Activated CD8-positive, alpha-beta T cell treated with anti-CD3 and anti-CD28 coated beads for 36 hours (primary cell): ENCODE measurements at regions of chr5 and their contacts with region 1.

Region 1: DNA sequence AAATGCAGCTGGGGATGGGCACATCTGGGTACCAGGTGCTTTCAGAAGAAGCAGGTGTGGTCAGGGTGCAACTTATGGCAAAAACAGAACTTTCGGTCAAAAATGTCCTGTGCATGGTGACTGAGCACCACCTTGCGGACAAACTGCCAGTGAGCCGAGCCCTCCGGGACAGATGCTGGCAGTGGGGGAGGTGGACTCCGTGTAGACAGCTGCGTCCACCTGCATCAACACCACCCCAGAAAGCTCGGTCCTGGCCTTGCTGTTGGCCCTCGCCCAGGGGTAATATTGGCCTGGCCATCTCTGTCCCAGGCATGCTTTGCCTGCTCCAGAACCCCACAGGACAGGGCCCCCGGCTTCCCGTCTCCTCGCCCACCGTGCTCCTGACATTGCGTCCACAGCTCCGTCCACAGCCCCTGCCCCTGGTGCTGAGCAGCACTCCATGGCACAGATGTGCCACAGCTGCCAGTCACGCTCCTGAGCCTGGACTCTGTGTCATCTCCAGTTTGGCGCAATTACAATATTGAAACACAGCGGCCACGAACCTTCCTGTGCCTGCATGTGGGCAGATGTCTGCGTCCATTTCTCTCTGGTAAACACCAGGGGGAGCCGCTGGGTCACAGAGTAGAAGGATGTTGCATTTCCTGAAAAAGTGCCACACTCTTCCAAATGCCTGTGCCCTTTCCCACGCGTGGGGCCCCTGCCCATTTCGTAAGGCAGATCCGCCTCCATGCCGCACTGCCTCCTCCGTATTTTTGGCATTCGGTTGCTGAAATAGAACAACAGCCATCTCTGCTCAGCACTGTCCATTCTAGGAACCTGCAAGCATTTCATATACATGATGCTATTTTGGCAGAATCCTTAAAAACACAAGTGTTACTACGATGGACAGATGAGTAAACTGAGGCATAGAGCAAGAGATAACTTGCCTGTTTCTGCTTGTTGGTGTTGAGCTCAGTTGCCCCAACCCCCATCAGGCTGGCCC is 33.4 kb upstream of the SLC6A19 start:
- DNase-seq: peak; percentile 79
- ATAC-seq: peak; percentile 87
- H3K4me3 Mint-ChIP-seq: peak overlapping the region; percentile 55
- H3K27ac Mint-ChIP-seq: no peak overlapping the region
- H3K4me1 Mint-ChIP-seq: peaks cover 5% of the 10 kb centered on the region
- H3K27me3 Mint-ChIP-seq: peaks cover 10% of the 10 kb centered on the region
- CTCF ChIP-seq: peak; percentile 80

Region 2: DNA sequence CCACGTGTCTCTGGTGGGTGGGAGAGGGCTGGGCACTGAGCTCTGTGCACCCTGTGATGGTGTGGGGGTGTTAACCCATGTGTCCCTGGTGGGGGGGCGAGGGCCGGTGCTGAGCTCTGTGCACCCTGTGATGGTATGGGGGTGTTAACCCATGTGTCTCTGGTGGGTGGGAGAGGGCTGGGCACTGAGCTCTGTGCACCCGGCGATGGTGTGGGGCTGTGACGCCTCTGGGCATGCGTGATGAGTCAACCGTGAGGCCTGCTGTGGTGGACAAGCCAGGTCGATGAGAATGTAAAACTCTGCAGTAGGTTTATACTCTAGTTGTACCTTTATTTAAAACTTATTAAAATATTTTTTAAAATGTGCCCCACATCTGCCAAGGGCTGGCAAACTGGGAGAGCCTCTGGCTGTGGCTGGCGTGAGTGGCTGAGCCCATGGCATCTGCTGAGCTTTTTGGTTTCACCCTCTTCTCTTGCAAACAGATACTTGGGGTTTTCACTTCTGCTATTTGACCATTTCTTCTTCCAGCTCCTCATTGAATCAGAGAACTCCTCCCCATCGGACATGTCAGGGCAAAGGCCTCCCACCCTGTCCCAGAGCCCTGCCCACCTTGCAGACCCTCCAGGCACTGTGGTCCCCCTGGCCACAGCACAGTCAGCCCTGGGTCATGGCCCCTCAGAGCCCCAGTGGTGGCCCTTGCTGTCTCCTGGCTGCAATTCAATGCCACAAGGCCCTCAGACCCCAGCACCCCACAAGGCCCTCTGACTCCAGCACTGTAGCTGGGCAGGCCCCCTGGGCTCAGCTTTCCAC is 743.5 kb before region 1 on chr5:
- CTCF ChIA-PET with region 1: no interaction called
- POLR2A ChIA-PET with region 1: no interaction called
- intact Hi-C with region 1: no loop called
- DNase-seq: no peak
- ATAC-seq: no peak
- H3K4me3 Mint-ChIP-seq: no peak overlapping the region
- H3K27ac Mint-ChIP-seq: no peak overlapping the region
- H3K4me1 Mint-ChIP-seq: peaks cover 19% of the 10 kb centered on the region
- H3K27me3 Mint-ChIP-seq: peaks cover 6% of the 10 kb centered on the region
- CTCF ChIP-seq: no peak

Region 3: GRCh38 chr5:956941-957747 is 210.9 kb before region 1 on chr5:
- CTCF ChIA-PET with region 1: no interaction called
- POLR2A ChIA-PET with region 1: no interaction called
- intact Hi-C with region 1: no loop called
- DNase-seq: peak; percentile 89
- ATAC-seq: peak; percentile 87
- H3K4me3 Mint-ChIP-seq: peak overlapping the region; percentile 8
- H3K27ac Mint-ChIP-seq: peak overlapping the region; percentile 68
- H3K4me1 Mint-ChIP-seq: peaks cover 30% of the 10 kb centered on the region
- H3K27me3 Mint-ChIP-seq: peaks cover 28% of the 10 kb centered on the region
- CTCF ChIP-seq: no peak

Region 4: DNA sequence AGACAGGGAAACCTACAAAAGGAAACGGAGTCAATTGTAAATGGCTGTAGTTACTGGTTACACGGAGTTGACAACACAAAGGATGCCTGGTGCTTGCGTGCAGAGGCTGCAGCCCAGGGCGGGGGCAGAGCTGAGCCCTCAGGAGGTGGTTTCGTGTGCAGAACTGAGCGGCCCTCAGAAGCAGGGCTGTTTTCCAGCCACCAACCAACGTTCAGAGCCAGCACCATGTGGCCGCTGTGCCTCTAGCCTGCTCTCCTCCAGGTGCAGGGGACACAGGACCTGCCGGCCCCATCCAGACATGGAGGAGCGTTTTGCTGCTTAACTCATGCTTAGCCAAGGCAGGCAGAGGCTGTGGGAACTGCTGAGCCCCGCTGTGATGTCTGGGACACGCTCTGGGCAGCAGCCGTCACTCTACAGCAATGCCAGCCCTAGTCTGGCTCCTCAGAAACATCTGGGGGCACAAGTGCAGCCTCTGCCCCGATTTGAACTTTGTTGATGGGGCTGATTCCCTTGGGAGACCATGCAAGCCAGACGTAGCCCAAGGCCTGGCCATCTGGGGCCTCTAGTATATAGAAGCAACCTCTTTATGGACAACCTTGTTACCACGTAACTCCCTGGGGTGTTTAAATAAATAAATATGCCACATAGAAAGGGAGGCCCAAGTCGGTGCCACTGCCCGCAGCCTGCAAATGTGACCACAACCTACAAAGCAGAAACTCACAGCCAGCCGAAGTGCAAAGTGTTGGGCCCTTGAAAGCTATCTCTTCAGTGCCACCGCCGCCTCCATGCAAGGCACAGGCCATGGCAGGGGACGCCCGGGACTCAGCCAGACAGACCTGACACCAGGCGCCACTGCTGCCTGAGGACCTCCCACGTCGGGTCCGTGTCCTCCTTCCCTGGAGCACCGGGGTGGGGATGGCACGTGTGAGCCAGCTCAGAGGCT is 117.3 kb before region 1 on chr5:
- CTCF ChIA-PET with region 1: no interaction called
- POLR2A ChIA-PET with region 1: no interaction called
- intact Hi-C with region 1: no loop called
- DNase-seq: no peak
- ATAC-seq: no peak
- H3K4me3 Mint-ChIP-seq: no peak overlapping the region
- H3K27ac Mint-ChIP-seq: no peak overlapping the region
- H3K4me1 Mint-ChIP-seq: peaks cover 6% of the 10 kb centered on the region
- H3K27me3 Mint-ChIP-seq: no peaks in the 10 kb centered on the region
- CTCF ChIP-seq: no peak

Region 5: DNA sequence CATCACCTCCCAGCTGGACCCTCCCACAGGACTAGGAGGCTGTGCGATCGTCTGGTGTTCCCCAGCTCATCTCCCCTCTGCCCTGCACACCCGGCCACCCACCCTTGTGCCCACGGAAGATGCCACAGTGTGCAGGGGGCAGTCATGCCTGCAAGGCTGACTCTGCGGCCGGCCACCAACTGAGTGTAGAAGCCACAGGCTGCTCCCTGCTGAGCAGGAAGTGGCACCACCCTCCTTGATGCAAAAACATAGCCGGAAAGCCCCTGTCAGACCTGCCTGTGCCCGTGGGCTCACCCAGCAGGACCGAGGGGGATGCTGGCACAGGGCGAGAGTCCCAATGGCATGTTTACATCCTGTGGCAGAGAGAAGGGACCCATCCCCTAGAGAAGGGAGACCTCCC is 15.9 kb before region 1 on chr5:
- CTCF ChIA-PET with region 1: interaction called, 11 read pairs
- POLR2A ChIA-PET with region 1: interaction called, 4 read pairs
- intact Hi-C with region 1: no loop called
- DNase-seq: peak; percentile 58
- ATAC-seq: peak; percentile 81
- H3K4me3 Mint-ChIP-seq: no peak overlapping the region
- H3K27ac Mint-ChIP-seq: no peak overlapping the region
- H3K4me1 Mint-ChIP-seq: peaks cover 21% of the 10 kb centered on the region
- H3K27me3 Mint-ChIP-seq: peaks cover 20% of the 10 kb centered on the region
- CTCF ChIP-seq: no peak

Region 6: DNA sequence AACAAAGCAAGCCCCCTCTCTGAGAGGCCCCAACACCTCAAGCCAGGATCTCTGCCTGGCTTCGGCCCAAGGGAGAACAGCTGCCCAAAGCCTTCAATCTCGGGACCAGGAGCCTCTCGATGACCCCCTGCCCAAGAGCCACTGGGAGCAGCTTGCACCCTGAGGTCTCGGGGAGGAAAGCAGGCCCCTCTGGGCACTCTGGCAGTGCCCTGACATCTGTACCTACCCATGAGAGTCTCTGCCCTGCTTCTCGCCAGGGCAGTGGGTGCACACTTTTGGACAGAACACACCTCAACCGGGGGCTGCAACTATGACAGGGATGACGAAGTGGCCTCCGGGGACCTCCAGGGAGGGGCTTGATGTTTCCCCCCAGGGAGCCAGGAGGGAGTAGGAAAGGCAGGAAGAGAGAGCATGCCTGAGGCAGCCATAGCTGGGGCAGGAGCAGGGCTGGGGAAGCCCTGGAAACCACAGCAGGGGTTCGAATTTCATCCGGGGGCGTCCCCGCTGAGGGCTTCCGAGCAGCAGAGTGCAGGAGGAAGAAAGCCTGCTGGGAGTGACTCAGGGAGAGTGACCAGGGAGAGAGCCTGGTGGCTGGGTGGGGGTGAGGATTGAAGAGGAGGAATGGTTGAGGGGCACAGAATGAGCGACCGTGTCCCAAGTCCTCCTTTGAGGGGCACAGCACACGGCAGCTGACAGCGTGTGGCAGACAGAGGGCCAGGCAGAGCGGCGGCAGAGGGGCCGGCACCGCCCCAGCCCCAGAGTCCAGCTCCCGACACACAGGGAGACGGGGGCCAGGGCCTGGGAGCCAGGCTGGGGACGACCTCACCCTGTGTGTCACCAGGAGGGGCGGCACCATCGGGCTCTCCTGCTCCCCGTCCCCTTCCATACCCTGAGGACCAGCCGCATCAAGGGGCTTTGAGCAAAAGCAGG is 353.9 kb after region 1 on chr5:
- CTCF ChIA-PET with region 1: no interaction called
- POLR2A ChIA-PET with region 1: no interaction called
- intact Hi-C with region 1: no loop called
- DNase-seq: no peak
- ATAC-seq: no peak
- H3K4me3 Mint-ChIP-seq: peak overlapping the region; percentile 82
- H3K27ac Mint-ChIP-seq: peak overlapping the region; percentile 26
- H3K4me1 Mint-ChIP-seq: peaks cover 40% of the 10 kb centered on the region
- H3K27me3 Mint-ChIP-seq: no peaks in the 10 kb centered on the region
- CTCF ChIP-seq: no peak